Right ventricle myocardium inferior (tissue), 1 donor: ENCODE measurements at regions of chr9 and their contacts with region 1.

Region 1: DNA sequence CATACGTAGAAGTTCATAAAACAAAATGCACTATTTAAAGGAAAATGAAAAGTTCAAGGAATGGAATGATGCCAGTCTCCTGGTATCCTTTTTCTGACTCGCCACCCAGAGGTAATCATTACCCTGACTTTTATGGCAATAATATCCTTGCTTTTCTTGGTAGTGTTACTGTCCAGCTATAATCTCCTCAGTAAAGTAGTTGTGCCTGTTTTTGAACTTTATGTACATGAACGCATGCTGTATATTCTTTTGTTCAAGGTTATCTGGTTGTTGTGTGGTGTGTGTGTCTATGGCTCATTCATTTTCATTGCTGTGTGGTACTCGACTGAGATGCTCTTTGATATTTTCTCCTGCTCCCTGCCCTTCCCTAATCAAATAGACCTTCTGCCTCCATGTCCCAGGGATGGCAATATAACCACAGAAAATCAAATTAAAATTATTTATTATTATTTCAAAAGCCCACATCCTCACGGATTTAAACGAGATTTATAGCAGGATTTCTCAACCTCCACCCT is 29.2 kb upstream of the FBP1 start:
- DNase-seq: no peak
- ATAC-seq: peak; percentile 8

Region 2: DNA sequence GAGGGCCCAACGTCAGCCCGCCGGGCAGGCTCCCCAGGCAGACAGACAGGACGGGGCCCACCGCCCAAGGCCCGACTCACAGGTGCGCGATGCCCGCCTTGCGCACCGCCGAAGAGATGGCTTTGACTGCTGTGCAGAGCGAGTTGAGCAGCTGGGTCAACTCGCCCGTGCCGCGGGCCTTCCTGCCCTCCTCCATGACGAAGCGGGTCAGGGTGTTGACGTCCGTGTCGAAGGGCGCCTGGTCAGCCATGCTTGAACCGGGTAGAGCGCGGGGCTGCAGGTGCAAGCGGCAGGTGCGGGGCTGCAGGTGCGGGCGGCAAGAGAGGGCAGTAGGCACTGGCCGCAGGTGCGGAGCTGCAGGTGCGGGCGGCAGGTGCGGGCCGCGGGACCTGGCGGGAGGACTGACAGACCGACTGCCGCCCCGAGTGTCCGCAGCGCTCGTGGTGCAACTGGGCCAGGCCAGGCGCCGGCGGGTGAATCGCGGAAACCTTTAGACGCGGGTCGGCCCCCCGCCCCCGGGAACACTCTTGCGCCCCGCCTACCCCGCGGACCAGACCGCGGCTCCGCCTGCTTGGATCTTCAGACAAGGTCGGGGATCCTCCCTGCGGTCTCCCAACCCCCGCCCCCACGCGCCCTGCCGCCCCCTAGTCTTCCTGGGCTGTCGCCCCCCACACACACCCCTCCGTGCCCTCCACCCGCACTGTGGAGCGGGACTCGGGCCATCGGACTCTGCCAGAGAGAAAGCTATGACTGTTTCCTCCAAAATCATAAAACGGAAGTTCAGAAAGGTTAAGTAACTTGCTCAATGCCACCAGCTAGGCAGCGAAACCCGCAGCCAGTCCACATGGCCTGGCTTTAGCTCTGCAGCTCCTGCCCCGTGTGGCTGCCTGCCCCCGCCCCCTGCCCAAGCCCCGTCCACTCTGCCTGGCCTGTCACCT is 29.1 kb before region 1 on chr9 and contains the start of gene FBP1:
- intact Hi-C with region 1: no loop called
- DNase-seq: peak; percentile 85
- ATAC-seq: peak; percentile 60
- total RNA-seq, gene FBP1: 1.0 TPM

Region 3: DNA sequence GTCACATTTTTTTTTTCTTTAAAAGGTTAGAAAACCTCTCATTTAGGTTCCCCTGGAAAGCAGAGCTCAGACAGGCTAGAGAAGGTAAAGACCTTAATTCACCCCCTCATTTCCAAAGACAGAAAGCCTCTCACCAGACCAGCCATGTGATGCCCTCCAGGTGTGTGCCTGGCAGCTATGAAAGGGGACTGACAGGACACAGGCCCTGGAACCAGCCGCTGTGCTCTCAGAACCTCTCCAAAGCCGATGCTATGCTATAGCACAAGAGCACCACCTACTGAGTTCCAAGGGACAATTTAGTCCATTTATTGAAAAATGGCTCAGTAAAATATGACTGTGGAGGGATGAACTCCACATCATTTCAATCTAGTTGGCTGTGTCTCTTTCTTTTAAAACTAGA is 600.2 kb after region 1 on chr9:
- intact Hi-C with region 1: loop called (anchors 10 kb)
- DNase-seq: no peak
- ATAC-seq: peak; percentile 67